ENCODE measurements at regions of chr1 and their contacts with region 1.

Region 1: DNA sequence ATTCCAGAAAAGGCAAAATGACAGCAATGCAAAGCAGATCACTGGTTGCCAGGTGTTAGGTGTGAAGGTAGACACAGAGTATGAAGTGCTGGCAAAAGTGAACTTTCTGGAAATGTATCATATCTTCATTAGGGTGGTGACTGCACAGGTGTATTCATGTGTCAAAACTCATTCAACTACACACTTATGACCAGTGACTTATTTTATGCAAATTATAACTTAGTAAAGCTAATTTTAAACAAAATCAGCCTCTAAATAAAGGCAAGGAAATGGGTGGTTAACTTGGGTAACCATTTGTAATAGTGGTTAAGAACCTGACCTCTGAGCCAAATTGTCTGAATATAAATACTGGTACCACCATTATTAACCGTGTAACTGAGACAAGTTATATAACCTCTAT is 7.4 kb downstream of the COP1 start:
- DNase-seq: no peak
- ATAC-seq: no peak
- H3K4me3 Mint-ChIP-seq: no peak overlapping the region
- H3K27ac Mint-ChIP-seq: no peak overlapping the region
- H3K4me1 Mint-ChIP-seq: peaks cover 68% of the 10 kb centered on the region
- H3K27me3 Mint-ChIP-seq: no peaks in the 10 kb centered on the region
- CTCF ChIP-seq: no peak

Region 2: DNA sequence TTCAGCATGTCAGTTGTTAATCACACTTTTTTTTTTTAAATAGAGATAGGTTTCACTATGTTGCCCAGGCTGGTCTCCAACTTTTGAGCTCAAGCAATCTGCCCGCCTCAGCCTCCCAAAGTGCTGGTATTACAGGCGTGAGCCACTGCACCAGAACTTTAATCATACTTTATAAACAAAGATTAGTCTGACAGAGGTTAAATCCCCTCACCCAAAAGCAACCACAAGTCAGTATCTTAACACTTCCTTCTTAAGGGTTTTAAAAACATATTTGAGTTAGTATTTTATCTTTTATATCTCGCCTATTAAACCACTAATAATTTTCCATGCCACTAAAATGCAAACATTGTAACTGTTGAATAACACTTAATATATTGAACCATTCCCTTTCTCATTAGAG is 62.8 kb before region 1 on chr1:
- CTCF ChIA-PET with region 1: no interaction called
- POLR2A ChIA-PET with region 1: no interaction called
- intact Hi-C with region 1: no loop called
- DNase-seq: no peak
- ATAC-seq: no peak
- H3K4me3 Mint-ChIP-seq: no peak overlapping the region
- H3K27ac Mint-ChIP-seq: no peak overlapping the region
- H3K4me1 Mint-ChIP-seq: peaks cover 8% of the 10 kb centered on the region
- H3K27me3 Mint-ChIP-seq: no peaks in the 10 kb centered on the region
- CTCF ChIP-seq: no peak

Region 3: GRCh38 chr1:176187001-176187400 is 12.7 kb before region 1 on chr1:
- CTCF ChIA-PET with region 1: no interaction called
- POLR2A ChIA-PET with region 1: interaction called, 3 read pairs
- intact Hi-C with region 1: loop called (anchors 2 kb)
- DNase-seq: no peak
- ATAC-seq: no peak
- H3K4me3 Mint-ChIP-seq: no peak overlapping the region
- H3K27ac Mint-ChIP-seq: no peak overlapping the region
- H3K4me1 Mint-ChIP-seq: peaks cover 68% of the 10 kb centered on the region
- H3K27me3 Mint-ChIP-seq: no peaks in the 10 kb centered on the region
- CTCF ChIP-seq: no peak

Region 4: GRCh38 chr1:176754676-176755075 is 555.0 kb after region 1 on chr1:
- CTCF ChIA-PET with region 1: no interaction called
- POLR2A ChIA-PET with region 1: no interaction called
- intact Hi-C with region 1: no loop called
- DNase-seq: no peak
- ATAC-seq: no peak
- H3K4me3 Mint-ChIP-seq: no peak overlapping the region
- H3K27ac Mint-ChIP-seq: no peak overlapping the region
- H3K4me1 Mint-ChIP-seq: no peaks in the 10 kb centered on the region
- H3K27me3 Mint-ChIP-seq: no peaks in the 10 kb centered on the region
- CTCF ChIP-seq: no peak